ENCODE measurements at regions of chr15 and their contacts with region 1.

Region 1: GRCh38 chr15:77496710-77497103 is 76.0 kb downstream of the HMG20A start:
- DNase-seq: peak; percentile 37 to 76 (median 60)
- ATAC-seq: peak; percentile 84
- H3K4me3 ChIP-seq: no peak overlapping the region
- H3K4me3 Mint-ChIP-seq: no peak overlapping the region
- H3K27ac ChIP-seq: no peak overlapping the region
- H3K27ac Mint-ChIP-seq: no peak overlapping the region
- H3K4me1 ChIP-seq: peaks cover 3 to 5% of the 10 kb centered on the region in 2 donors
- H3K4me1 Mint-ChIP-seq: peaks cover 13 to 29% (median 24%) of the 10 kb centered on the region in 7 donors
- H3K27me3 ChIP-seq: no peaks in the 10 kb centered on the region
- H3K27me3 Mint-ChIP-seq: no peaks in the 10 kb centered on the region

Region 2: DNA sequence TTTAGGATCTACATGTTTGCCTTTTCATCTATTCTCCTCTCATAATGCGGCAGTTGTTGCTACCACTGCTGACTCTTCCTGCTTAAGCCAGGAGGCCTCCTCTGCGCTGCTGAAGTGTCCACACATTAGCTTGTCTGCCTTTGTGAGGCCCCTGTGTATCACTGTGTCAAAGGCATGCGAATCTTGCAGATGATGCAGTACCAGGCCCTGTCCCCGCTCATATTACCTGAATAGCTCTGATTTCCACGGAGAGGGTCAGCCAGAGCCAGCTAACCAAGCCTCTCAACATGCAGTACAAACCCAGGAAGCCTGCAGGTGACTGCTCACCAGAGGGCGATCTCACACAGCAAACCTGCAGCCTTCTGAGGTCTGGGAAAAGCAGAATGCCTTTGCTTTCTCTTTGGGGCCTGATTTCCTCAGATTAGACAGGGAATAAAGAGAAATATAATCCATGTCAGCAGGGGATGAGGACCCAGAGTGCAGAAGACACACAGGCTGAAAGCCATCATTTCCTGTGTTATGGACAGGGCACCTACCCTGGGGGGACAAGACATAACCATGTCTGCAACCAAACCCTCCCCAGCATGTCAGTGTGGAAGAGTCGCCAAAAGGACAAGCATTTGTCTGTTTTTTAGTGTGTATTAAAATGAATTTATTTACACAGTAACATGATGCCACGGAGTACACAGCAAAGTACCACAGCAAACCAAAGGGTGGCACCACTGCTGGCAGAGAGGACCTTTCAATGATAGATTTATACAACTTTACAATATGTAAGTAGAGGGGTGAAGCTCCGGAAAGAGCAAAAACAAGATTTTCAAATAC is 389.0 kb before region 1 on chr15:
- CTCF ChIA-PET with region 1: interaction called, 3 read pairs
- POLR2A ChIA-PET with region 1: no interaction called
- intact Hi-C with region 1: loop called in 1 of 2 experiments (anchors 1 kb)
- DNase-seq: peak in 6 of 9 donors; percentile 12 to 30 (median 21)
- ATAC-seq: no peak
- H3K4me3 ChIP-seq: no peak overlapping the region
- H3K4me3 Mint-ChIP-seq: no peak overlapping the region
- H3K27ac ChIP-seq: no peak overlapping the region
- H3K27ac Mint-ChIP-seq: peak overlapping the region in 1 of 9 donors; percentile 8
- H3K4me1 ChIP-seq: no peaks in the 10 kb centered on the region
- H3K4me1 Mint-ChIP-seq: peaks cover 0 to 9% (median 0%) of the 10 kb centered on the region in 7 donors
- H3K27me3 ChIP-seq: no peaks in the 10 kb centered on the region
- H3K27me3 Mint-ChIP-seq: no peaks in the 10 kb centered on the region

Region 3: GRCh38 chr15:77118882-77119321 is 377.8 kb before region 1 on chr15:
- CTCF ChIA-PET with region 1: interaction called, 43 read pairs
- POLR2A ChIA-PET with region 1: no interaction called
- intact Hi-C with region 1: loop called (anchors 1 kb)
- DNase-seq: peak in 7 of 9 donors; percentile 19 to 63 (median 47)
- ATAC-seq: peak; percentile 70
- H3K4me3 ChIP-seq: no peak overlapping the region
- H3K4me3 Mint-ChIP-seq: no peak overlapping the region
- H3K27ac ChIP-seq: no peak overlapping the region
- H3K27ac Mint-ChIP-seq: no peak overlapping the region
- H3K4me1 ChIP-seq: no peaks in the 10 kb centered on the region
- H3K4me1 Mint-ChIP-seq: peaks cover 0 to 12% (median 6%) of the 10 kb centered on the region in 7 donors
- H3K27me3 ChIP-seq: no peaks in the 10 kb centered on the region
- H3K27me3 Mint-ChIP-seq: no peaks in the 10 kb centered on the region

Region 4: GRCh38 chr15:77168616-77169015 is 328.1 kb before region 1 on chr15:
- CTCF ChIA-PET with region 1: no interaction called
- POLR2A ChIA-PET with region 1: no interaction called
- intact Hi-C with region 1: no loop called
- DNase-seq: no peak
- ATAC-seq: no peak
- H3K4me3 ChIP-seq: no peak overlapping the region
- H3K4me3 Mint-ChIP-seq: no peak overlapping the region
- H3K27ac ChIP-seq: no peak overlapping the region
- H3K27ac Mint-ChIP-seq: peak overlapping the region in 1 of 9 donors; percentile 39
- H3K4me1 ChIP-seq: no peaks in the 10 kb centered on the region
- H3K4me1 Mint-ChIP-seq: peaks cover under 1 to 10% (median 10%) of the 10 kb centered on the region in 7 donors
- H3K27me3 ChIP-seq: no peaks in the 10 kb centered on the region
- H3K27me3 Mint-ChIP-seq: no peaks in the 10 kb centered on the region

Region 5: GRCh38 chr15:77186594-77187011 is 310.1 kb before region 1 on chr15:
- CTCF ChIA-PET with region 1: interaction called, 9 read pairs
- POLR2A ChIA-PET with region 1: no interaction called
- intact Hi-C with region 1: loop called in 1 of 2 experiments (anchors 1 kb)
- DNase-seq: peak in 3 of 9 donors; percentile 13 to 30 (median 18)
- ATAC-seq: no peak
- H3K4me3 ChIP-seq: no peak overlapping the region
- H3K4me3 Mint-ChIP-seq: no peak overlapping the region
- H3K27ac ChIP-seq: no peak overlapping the region
- H3K27ac Mint-ChIP-seq: no peak overlapping the region
- H3K4me1 ChIP-seq: peaks cover under 1 to 7% of the 10 kb centered on the region in 2 donors
- H3K4me1 Mint-ChIP-seq: peaks cover 12 to 57% (median 46%) of the 10 kb centered on the region in 7 donors
- H3K27me3 ChIP-seq: no peaks in the 10 kb centered on the region
- H3K27me3 Mint-ChIP-seq: no peaks in the 10 kb centered on the region

Region 6: DNA sequence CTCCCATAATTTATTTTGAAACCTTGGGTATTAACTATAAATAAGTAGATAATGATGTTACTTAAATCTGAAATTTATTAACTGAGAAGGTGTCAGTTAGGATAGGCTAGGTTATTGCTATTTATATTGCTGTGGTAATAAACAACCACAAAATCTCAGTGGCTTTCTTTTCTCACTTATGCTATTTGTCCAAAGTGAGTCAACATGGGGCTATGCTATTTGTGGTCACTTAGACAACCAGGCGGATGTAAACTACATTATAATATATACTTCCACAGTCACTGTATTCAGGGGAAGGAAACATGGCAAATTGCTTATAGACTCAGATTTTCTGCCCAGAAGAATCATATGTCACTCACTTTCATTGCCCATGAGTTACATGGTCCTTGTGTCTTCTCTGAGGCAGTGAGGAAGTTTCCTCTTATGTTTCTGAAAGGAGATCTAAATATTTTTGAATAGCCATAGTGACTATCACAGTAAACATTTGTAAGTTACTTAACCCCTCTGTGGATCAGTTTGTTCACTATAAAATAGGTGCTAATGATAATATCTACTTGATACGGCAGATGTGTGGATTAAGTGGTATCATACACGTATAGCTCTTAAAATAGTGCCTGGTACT is 56.2 kb before region 1 on chr15:
- CTCF ChIA-PET with region 1: no interaction called
- POLR2A ChIA-PET with region 1: no interaction called
- intact Hi-C with region 1: no loop called
- DNase-seq: no peak
- ATAC-seq: no peak
- H3K4me3 ChIP-seq: no peak overlapping the region
- H3K4me3 Mint-ChIP-seq: no peak overlapping the region
- H3K27ac ChIP-seq: no peak overlapping the region
- H3K27ac Mint-ChIP-seq: no peak overlapping the region
- H3K4me1 ChIP-seq: peaks cover 0 to 9% of the 10 kb centered on the region in 2 donors
- H3K4me1 Mint-ChIP-seq: peaks cover 10 to 79% (median 66%) of the 10 kb centered on the region in 7 donors
- H3K27me3 ChIP-seq: no peaks in the 10 kb centered on the region
- H3K27me3 Mint-ChIP-seq: no peaks in the 10 kb centered on the region

Region 7: GRCh38 chr15:77514635-77515402 is 18.1 kb after region 1 on chr15:
- CTCF ChIA-PET with region 1: no interaction called
- POLR2A ChIA-PET with region 1: no interaction called
- intact Hi-C with region 1: no loop called
- DNase-seq: no peak
- ATAC-seq: no peak
- H3K4me3 ChIP-seq: no peak overlapping the region
- H3K4me3 Mint-ChIP-seq: no peak overlapping the region
- H3K27ac ChIP-seq: no peak overlapping the region
- H3K27ac Mint-ChIP-seq: no peak overlapping the region
- H3K4me1 ChIP-seq: no peaks in the 10 kb centered on the region
- H3K4me1 Mint-ChIP-seq: no peaks in the 10 kb centered on the region
- H3K27me3 ChIP-seq: no peaks in the 10 kb centered on the region
- H3K27me3 Mint-ChIP-seq: no peaks in the 10 kb centered on the region